A673 (cell line): ENCODE measurements at regions of chr7 and their contacts with region 1.

Region 1: DNA sequence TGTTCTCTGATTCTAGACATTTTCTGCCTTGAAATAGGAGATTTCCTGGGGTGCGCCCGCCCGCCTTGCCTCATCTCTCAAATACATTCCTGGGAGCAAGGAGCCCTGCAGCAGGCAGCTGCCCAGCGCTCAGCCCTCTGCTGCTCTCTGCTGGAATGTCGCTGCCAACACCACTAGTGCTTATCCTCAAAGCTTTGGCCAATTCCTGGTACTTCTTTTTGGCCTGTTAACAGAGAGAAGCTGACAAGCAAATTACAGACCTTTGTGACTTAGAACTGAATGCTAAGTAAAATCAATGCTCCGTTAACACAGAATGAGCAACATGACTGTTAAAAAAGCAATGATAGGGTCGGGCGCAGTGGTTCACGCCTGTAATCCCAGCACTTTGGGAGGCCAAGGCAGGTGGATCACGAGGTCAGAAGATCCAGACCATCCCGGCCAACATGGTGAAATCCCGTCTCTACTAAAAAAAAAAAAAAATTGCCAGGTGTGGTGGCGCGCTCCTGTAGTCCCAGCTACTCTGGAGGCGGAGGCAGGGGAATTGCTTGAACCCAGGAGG is 41.9 kb upstream of the SYPL1 start:
- DNase-seq: peak; percentile 90
- H3K4me3 ChIP-seq: no peak overlapping the region
- H3K27ac ChIP-seq: no peak overlapping the region
- H3K4me1 ChIP-seq: no peaks in the 10 kb centered on the region
- H3K27me3 ChIP-seq: no peaks in the 10 kb centered on the region
- CTCF ChIP-seq: peak; percentile 96

Region 2: DNA sequence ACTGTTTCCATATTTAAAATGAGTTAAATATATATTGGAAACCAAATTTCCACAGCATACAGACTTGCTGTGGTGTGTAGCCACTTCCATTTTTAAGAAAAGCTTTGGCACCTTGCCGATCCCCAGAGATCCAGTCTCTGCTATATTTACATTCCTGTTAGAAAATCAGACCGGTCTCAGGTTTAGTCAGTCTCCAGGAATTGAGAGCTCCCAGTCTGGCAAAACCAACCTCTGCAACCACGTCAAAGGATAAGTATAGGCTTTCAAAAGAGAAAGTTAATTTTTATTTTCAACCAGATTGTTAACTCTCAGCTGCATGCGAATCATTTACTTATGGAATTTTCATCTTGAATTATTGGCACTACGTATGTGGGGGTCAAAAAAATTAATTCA is 660.1 kb before region 1 on chr7:
- CTCF ChIA-PET with region 1: no interaction called
- POLR2A ChIA-PET with region 1: no interaction called
- intact Hi-C with region 1: loop called (anchors 5 kb)
- DNase-seq: no peak
- H3K4me3 ChIP-seq: no peak overlapping the region
- H3K27ac ChIP-seq: no peak overlapping the region
- H3K4me1 ChIP-seq: no peaks in the 10 kb centered on the region
- H3K27me3 ChIP-seq: no peaks in the 10 kb centered on the region
- CTCF ChIP-seq: no peak

Region 3: DNA sequence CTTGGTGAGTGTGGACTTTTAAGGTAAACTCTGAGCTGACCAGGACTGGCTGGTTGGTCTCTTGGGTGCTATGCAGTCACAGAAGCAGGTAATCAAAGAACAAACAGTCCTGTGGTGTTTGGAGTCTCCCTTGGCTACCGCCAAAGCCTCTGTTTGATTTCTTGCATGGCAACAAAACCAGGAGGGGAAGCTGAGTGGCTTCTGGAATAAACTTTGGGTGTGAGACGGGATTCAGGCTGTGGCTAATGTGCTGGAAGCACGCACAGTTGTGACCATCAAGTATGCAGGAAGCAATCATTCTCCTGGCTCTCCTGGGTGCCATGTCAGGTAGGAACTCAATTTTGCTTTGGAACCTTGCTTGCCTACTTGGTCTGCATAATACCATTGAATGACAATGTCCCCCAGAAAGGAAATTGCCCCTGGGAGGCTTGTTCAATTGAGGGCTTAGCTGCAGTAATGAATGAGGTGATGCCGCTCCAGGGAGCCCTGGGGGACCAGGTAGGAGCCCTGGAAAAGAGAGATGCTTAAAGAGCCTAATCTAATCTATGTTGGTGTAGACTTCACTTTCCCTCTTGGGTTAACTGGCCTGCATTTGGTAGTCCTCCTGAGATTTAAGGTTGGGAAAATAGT is 190.8 kb before region 1 on chr7 and contains the start of gene CDHR3:
- CTCF ChIA-PET with region 1: no interaction called
- POLR2A ChIA-PET with region 1: no interaction called
- intact Hi-C with region 1: no loop called
- DNase-seq: no peak
- H3K4me3 ChIP-seq: no peak within 1 kb of the TSS
- H3K27ac ChIP-seq: no peak within 1 kb of the TSS
- H3K4me1 ChIP-seq: no peaks in the 10 kb centered on the region
- H3K27me3 ChIP-seq: no peaks in the 10 kb centered on the region
- CTCF ChIP-seq: no peak
- total RNA-seq, gene CDHR3: 13.9 and 17.7 TPM in 2 replicates

Region 4: DNA sequence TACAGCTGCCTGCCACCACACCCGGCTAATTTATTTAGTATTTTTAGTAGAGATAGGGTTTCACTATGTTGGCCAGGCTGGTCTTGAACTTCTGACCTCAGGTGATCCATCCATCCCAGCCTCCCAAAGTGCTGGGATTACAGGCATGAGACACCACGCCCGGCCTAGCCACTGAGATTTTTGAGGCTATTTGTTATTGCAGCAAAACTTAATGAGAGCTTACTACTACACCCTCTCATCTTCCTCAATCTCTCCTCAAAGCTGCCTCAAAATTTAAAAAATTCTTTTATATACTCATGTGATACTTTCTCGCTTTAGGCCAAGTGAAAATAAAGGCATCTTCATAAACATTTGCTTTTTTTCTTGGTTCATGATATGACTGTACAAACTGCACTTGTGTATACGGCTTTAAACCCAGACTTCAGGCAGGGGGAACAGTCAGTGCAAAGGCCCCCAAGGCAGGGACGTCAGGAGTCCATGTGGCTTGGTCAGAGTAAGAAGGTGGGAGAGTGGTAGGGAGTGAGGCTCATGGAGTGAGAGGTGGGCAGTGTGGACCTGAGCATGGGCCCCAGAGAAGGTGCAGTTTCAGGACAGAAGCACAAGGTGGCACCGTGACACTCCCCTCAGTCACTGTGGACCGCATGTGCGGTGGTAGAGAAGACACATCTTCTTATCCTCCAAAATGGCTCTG is 97.3 kb before region 1 on chr7:
- CTCF ChIA-PET with region 1: interaction called, 5 read pairs
- POLR2A ChIA-PET with region 1: no interaction called
- intact Hi-C with region 1: loop called (anchors 1 kb)
- DNase-seq: peak; percentile 85
- H3K4me3 ChIP-seq: no peak overlapping the region
- H3K27ac ChIP-seq: no peak overlapping the region
- H3K4me1 ChIP-seq: peaks cover 20% of the 10 kb centered on the region
- H3K27me3 ChIP-seq: no peaks in the 10 kb centered on the region
- CTCF ChIP-seq: peak; percentile 90

Region 5: DNA sequence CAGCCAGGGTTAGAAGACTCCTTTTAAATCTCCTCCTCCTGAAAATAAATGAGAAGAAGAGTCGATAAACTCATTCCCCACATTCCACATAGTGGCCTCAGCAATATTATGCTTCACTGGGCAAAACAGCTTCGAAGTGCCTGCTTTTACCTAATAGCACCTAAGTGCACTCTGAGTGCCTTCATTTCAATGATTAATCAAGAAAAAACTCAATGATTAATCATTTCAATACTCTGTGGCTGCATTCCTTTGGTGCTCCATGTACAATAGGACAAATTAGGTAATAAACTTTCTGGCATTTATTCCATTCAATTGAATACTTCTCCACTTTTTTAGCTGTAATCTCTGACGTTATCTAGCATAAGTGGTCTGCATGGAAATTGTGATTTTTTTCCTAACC is 332.4 kb after region 1 on chr7:
- CTCF ChIA-PET with region 1: no interaction called
- POLR2A ChIA-PET with region 1: no interaction called
- intact Hi-C with region 1: no loop called
- DNase-seq: no peak
- H3K4me3 ChIP-seq: no peak overlapping the region
- H3K27ac ChIP-seq: no peak overlapping the region
- H3K4me1 ChIP-seq: peaks cover 6% of the 10 kb centered on the region
- H3K27me3 ChIP-seq: no peaks in the 10 kb centered on the region
- CTCF ChIP-seq: no peak

Region 6: DNA sequence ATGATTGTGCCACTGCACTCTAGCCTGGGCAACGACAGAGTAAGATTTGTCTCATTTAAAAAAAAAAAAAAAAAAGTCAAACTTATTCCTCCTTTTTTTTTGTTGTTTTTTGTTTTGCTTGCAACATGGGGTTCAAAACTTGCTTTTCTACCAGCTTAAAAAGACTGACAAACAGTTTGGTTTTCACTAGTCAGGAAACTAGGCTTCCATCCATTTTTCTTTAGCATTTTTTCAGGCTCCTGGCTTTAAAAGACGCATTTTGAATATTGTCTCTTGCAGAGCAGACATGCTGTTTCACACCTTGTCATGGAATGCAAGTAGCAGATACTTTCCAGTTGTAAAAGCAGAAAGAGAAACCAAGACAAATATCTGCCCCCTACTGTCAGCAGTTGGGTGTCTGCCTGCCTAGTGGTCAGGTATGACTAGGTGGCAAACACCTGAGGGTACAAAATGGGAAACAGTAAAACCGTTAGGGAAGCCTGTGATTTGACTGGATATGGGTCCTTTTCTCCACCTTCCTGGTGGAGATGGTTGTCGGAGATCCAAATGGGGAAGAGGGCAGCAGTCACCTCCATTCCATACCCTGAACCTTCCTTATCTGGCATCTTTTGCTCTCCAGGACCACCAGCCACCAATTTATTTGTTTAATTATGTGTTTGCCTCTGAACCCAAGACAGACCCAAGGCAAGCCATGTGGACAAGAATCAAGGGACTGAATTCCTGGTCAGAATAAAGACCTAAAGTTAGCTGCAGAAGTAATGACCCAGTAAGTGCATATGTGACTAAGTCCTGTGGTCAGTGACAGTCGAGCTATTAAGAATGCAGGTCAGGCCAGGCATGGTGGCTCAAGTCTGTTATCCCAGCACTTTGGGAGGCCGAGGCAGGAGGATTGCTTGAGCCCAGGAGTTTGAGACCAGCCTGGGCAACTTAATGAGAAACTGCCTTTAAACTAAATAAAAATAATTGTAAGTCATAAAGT is 367.3 kb after region 1 on chr7:
- CTCF ChIA-PET with region 1: no interaction called
- POLR2A ChIA-PET with region 1: no interaction called
- intact Hi-C with region 1: no loop called
- DNase-seq: no peak
- H3K4me3 ChIP-seq: no peak overlapping the region
- H3K27ac ChIP-seq: no peak overlapping the region
- H3K4me1 ChIP-seq: no peaks in the 10 kb centered on the region
- H3K27me3 ChIP-seq: peaks cover 14% of the 10 kb centered on the region
- CTCF ChIP-seq: no peak